GM10248 (cell line): ENCODE measurements at regions of chr16 and their contacts with region 1.

Region 1: GRCh38 chr16:68486502-68487202 is 38.3 kb upstream of the SMPD3 start:
- DNase-seq: no peak
- CTCF ChIP-seq: no peak

Region 2: DNA sequence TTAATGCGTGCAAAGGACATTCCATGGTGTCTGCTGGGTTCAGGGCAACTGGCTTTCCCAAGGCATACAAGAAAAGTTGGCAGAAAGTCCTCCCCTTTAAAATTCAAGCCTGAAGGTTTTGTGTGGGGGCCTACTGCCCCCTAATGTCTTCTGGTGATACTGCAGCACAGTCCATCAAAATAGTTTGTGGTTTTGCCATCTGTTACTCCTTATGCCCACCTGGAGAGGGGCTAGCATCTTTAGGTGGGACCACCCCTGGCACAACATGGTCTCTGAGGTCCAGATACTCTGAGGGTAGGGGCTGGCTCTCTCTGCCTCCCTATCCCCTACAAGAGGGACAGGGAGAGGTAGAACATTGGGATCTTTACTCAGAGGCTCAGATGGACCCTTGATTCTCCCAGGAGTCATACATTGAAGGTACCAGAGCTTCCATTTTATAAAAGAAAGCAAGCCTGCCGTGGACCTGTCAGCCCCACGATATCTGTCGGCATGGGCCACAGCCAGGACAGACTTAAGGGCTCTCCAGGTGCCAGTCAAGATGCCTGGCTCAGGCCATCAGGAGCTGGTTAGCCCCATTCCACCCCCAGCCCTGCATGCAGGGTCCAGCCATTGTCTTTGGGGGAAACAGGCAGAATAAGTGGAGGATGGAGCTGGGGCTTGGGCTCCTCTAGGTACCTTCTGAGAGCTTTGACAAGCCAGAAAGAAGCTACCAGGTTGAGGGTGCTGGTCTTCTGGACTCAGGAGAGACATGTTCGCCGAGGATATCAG is 257.0 kb before region 1 on chr16:
- CTCF ChIA-PET with region 1: no interaction called
- POLR2A ChIA-PET with region 1: no interaction called
- DNase-seq: peak; percentile 58
- CTCF ChIP-seq: peak; percentile 75

Region 3: GRCh38 chr16:68452176-68452575 is 34.5 kb before region 1 on chr16:
- CTCF ChIA-PET with region 1: no interaction called
- POLR2A ChIA-PET with region 1: no interaction called
- DNase-seq: no peak
- CTCF ChIP-seq: no peak

Region 4: DNA sequence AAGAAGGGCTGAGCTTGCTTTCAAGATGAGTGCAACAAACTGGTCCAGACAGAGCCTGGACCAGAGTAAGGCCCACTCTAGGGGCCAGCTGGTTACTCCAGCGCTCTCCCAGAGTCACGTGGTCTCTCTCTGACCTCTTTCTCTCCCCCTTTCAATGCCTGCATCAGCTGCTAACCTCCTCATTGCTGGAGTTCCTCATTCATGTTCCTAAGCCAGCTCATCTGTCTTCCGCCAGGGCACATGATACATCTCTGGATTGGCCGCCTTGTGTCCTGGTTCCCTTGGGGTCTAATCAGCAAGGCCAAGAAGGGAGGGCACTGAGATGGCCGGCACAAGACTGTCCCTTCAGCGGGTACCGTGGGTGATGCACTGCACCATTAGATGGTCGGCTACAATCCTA is 25.5 kb after region 1 on chr16:
- CTCF ChIA-PET with region 1: interaction called, 10 read pairs
- POLR2A ChIA-PET with region 1: no interaction called
- DNase-seq: no peak
- CTCF ChIP-seq: no peak

Region 5: DNA sequence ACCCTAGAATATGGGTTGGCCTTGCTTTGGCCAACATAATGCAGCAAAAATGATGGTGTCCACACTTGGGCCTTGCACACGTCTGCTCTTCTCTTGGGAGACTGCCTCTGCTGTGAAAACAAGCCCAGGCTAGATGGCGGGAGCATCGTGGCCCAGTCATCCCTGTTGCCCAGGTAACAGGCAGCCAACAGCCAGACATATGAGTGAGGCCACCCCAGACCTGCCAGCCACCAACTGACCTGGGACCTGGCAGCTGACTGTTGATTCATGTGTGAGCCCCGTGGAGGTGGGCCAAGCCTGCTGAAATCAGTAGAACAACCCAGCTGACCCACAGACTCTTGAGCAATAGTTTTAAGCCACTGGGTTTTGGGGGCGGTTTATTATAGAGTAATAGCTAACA is 119.1 kb after region 1 on chr16:
- CTCF ChIA-PET with region 1: no interaction called
- POLR2A ChIA-PET with region 1: no interaction called
- DNase-seq: no peak
- CTCF ChIP-seq: no peak

Region 6: DNA sequence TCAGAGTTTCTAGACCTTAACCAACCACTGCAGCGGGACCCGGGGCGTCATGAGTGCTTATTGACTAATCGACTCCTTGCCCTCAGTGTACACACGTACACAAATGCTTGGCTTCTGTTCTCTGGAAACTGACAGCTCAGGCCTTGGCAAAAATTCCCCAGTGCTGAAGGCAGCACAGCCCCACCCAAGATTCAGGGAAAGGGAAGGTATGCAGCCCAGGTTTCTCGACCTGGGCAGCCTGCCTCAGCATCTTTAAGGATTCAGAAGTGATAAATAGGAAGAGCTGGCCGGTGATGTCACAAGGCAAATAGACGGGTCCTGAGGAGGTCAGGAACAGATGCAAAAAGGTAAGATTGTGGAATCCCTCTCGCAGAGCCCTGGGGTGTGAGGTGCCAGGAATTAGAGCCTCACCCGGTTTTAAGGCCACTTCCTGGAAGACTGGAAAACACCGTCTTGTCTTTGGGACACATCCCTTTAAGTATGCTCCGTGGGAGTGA is 149.5 kb after region 1 on chr16:
- CTCF ChIA-PET with region 1: no interaction called
- POLR2A ChIA-PET with region 1: no interaction called
- DNase-seq: no peak
- CTCF ChIP-seq: no peak